ENCODE measurements at regions of chr10 and their contacts with region 1.

Region 1: DNA sequence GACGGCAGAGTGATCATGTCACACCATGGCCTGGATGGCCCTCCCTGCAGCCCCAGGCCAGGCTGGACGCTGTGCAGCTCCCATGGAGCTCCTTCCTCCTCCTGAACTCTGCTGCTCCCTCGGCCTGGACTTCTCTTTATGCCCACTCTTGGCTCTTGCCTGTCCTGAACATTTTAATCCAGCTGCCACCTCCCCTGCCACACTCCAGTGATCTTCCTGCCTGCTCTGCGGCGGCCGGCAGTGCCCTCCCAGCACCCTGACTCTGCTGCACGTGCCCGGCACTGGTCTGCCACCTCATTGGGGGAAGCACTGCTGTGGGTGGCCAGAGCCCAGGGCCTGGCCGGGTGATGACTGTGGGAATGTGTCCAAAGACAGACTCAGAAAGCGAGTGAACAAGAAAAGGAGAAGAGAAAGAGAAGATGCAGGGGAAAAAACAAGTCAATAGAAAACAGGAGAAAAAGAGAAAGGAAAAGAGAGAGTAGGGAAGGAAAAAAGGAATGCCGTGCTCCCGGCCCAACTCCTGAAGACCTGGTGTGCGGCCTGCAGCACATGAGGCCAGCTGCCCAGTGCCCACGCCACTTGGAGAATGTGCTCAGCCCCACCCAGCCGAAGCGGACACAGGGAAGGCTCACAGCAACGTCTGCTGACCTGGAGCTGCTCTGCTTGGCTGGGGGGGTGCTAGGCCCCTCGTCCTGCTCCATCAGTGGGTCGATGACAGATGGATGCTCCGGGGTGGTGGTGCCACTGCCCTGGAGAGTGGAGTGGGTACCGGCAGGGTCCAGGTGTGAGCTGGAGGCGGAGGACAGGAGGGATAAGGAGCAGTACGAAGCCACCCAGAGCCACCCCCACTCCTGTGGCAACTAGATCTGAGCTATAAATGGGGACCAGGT is 115.9 kb downstream of the DLG5 start:
- DNase-seq: no peak
- ATAC-seq: no peak
- H3K4me3 ChIP-seq: no peak overlapping the region
- H3K27ac ChIP-seq: no peak overlapping the region
- H3K4me1 ChIP-seq: no peaks in the 10 kb centered on the region
- H3K27me3 ChIP-seq: no peaks in the 10 kb centered on the region
- CTCF ChIP-seq: no peak
- EP300 ChIP-seq: no peak
- POLR2A ChIP-seq: no peak
- RAD21 ChIP-seq: no peak

Region 2: GRCh38 chr10:77799352-77799751 is 11.3 kb before region 1 on chr10:
- CTCF ChIA-PET with region 1: no interaction called
- POLR2A ChIA-PET with region 1: interaction called, 10 read pairs
- in situ Hi-C with region 1: no loop called
- intact Hi-C with region 1: no loop called
- DNase-seq: no peak
- ATAC-seq: peak; percentile 25; the same call in 2 of the 3 replicates
- H3K4me3 ChIP-seq: no peak overlapping the region
- H3K27ac ChIP-seq: no peak overlapping the region
- H3K4me1 ChIP-seq: no peaks in the 10 kb centered on the region
- H3K27me3 ChIP-seq: no peaks in the 10 kb centered on the region
- CTCF ChIP-seq: no peak
- EP300 ChIP-seq: no peak
- POLR2A ChIP-seq: no peak
- RAD21 ChIP-seq: no peak